ENCODE measurements at regions of chr9 and their contacts with region 1.

Region 1: DNA sequence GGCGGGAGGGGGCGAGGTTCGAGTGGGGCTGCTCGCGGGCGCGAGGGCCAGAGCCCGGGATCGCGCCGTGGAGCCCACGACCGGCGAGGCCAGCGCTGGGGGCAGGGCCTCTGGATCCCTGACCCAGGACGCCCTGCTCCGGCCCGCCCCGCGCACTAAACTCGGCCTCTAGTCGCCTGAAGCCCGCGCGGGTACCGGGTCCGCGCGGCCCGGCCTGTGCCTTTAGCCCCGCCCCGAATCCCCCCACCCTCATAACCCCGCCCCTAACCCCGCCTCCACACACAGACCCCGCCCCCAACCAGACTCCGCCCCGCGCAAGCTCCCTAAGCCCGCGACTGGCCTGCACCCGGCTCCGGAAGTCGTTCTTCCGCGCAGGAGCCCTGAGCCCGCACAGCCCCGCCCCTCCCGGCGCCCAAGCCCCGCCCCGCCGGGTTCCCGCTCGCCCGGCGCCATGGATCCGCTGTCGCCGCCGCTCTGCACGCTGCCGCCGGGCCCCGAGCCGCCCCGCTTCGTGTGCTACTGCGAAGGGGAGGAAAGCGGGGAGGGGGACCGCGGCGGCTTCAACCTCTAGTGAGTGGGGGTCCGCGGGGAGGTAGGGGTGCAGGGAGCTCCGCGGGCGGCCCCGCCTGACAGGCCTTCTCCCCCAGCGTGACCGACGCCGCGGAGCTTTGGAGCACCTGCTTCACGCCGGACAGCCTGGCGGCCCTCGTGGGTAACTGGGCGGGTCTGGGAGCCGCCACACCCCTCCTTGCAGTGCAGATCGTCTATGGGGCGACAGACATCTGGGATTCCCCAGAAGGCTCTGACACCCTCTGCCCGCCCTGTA is at the start of gene PAXX:
- H3K4me3 ChIP-seq: peak within 1 kb of the TSS; percentile 72
- H3K27ac ChIP-seq: peak within 1 kb of the TSS; percentile 83
- H3K4me1 ChIP-seq: peaks cover 5% of the 10 kb centered on the region
- CTCF ChIP-seq: peak; percentile 33; the same call in 1 of the 2 replicates

Region 2: DNA sequence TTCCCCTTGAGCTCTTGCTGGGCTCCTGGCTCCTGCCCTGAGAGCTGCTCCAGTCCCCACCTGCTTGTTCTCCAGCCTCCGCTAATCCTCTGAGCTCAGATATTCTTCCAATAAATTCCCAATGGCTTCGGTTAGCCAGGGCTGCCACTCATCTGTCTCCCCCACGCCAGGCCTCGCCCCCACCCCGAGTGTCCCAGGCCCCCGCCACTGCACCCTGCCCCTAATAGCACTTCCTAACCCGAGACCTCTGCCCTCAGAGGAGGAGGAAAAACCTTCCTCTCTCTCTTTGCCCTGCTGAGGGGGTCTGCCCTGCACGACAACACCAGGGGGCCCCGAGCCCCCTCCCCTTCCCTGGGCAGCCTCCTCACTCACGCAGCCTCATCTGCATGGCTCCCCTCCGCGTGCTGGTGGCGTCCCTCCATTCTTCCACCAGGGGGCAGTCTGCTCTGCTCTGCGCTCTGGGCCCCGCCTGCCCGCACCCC is 222.5 kb before region 1 on chr9:
- CTCF ChIA-PET with region 1: no interaction called
- POLR2A ChIA-PET with region 1: no interaction called
- H3K4me3 ChIP-seq: no peak overlapping the region
- H3K27ac ChIP-seq: no peak overlapping the region
- H3K4me1 ChIP-seq: no peaks in the 10 kb centered on the region
- CTCF ChIP-seq: peak; percentile 59

Region 3: DNA sequence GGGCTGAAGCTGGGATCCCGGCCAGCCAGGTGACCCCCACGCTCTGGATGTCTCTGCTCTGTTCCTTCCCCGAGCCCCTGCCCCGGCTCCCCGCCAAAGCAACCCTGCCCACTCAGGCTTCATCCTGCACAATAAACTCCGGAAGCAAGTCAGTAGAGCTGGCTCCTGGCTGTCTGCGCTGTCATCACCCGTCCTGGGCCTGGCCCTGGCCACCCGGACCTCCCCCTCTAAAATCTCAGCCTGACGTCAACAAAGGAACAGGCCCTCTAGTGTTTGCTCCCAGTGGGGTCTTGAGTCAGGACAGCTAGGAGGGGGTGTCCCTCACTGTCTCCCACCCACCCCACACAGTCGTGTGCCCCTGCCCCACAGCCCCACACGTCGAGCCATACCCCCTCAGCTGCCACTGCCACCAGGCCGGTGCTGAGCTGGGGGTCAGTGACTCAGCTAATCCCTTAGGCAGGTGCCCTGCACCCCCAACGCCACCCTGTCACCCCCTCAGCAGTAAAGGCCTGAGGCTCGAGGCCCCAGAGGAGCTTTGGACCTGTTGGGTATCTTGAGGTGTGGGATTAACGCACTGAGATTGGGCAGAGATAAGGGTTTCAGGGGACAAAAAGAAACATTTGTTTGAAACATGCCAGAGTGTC is 10.5 kb before region 1 on chr9:
- CTCF ChIA-PET with region 1: interaction called, 3 read pairs
- POLR2A ChIA-PET with region 1: interaction called, 13 read pairs
- H3K4me3 ChIP-seq: no peak overlapping the region
- H3K27ac ChIP-seq: no peak overlapping the region
- H3K4me1 ChIP-seq: no peaks in the 10 kb centered on the region
- CTCF ChIP-seq: no peak

Measured in HEK293 (cell line).